ENCODE measurements at regions of chr6 and their contacts with region 1.

Region 1: DNA sequence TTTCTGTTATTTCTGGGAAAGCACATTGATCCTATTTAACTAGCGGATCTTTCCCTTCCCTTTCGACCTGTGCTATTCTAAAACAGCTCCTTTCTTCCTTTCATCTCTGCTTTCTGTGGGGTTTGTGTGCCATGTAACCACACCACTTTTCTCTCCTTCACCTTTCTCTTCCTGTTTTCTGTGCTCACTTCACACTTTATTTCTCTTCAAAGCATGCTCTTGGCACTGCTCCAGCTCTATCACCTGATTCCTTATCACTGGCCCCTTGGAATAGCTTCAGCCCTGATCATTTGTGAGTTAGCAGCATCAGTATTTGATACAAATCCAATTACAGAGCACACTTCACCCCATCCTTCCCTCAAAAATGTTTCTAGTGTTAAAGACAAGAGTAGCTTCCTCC is 8.1 kb upstream of the METTL24 start:
- DNase-seq: no peak
- H3K4me3 ChIP-seq: no peak overlapping the region
- H3K27ac ChIP-seq: no peak overlapping the region
- H3K4me1 ChIP-seq: peaks cover 9 to 38% (median 26%) of the 10 kb centered on the region in 4 donors
- H3K27me3 ChIP-seq: no peaks in the 10 kb centered on the region
- CTCF ChIP-seq: no peak
- EP300 ChIP-seq: no peak
- POLR2A ChIP-seq: no peak

Region 2: GRCh38 chr6:110325197-110325596 is 41.1 kb before region 1 on chr6:
- intact Hi-C with region 1: loop called (anchors 5 kb)
- DNase-seq: no peak
- H3K4me3 ChIP-seq: no peak overlapping the region
- H3K27ac ChIP-seq: peak overlapping the region; percentile 83 to 89 (median 84)
- H3K4me1 ChIP-seq: peaks cover 9 to 85% (median 77%) of the 10 kb centered on the region in 4 donors
- H3K27me3 ChIP-seq: no peaks in the 10 kb centered on the region
- CTCF ChIP-seq: no peak
- EP300 ChIP-seq: no peak
- POLR2A ChIP-seq: no peak

Region 3: GRCh38 chr6:110506177-110506576 is 139.9 kb after region 1 on chr6:
- intact Hi-C with region 1: no loop called
- DNase-seq: peak; percentile 31
- H3K4me3 ChIP-seq: no peak overlapping the region
- H3K27ac ChIP-seq: no peak overlapping the region
- H3K4me1 ChIP-seq: no peaks in the 10 kb centered on the region
- H3K27me3 ChIP-seq: no peaks in the 10 kb centered on the region
- CTCF ChIP-seq: no peak
- EP300 ChIP-seq: no peak
- POLR2A ChIP-seq: no peak

Measured in esophagus muscularis mucosa (tissue), 4 donors.